GM12878 (cell line): ENCODE measurements at regions of chr18 and their contacts with region 1.

Region 1: GRCh38 chr18:6219116-6219717 is 195.5 kb downstream of the L3MBTL4 start:
- DNase-seq: no peak
- ATAC-seq: peak; percentile 78
- H3K4me3 ChIP-seq: no peak overlapping the region
- H3K27ac ChIP-seq: no peak overlapping the region
- H3K4me1 ChIP-seq: no peaks in the 10 kb centered on the region
- H3K27me3 ChIP-seq: no peaks in the 10 kb centered on the region
- CTCF ChIP-seq: peak; percentile 57 to 85 (median 72)
- EP300 ChIP-seq: no peak
- POLR2A ChIP-seq: no peak
- RAD21 ChIP-seq: peak; percentile 75

Region 2: GRCh38 chr18:5879479-5879882 is 339.7 kb before region 1 on chr18:
- CTCF ChIA-PET with region 1: interaction called, 6 read pairs
- POLR2A ChIA-PET with region 1: no interaction called
- RAD21 ChIA-PET with region 1: no interaction called
- SMC1A ChIA-PET with region 1: interaction called, 5 read pairs
- in situ Hi-C with region 1: loop called (anchors 10 kb)
- intact Hi-C with region 1: loop called (anchors 2 kb)
- DNase-seq: no peak
- ATAC-seq: no peak
- H3K4me3 ChIP-seq: no peak overlapping the region
- H3K27ac ChIP-seq: no peak overlapping the region
- H3K4me1 ChIP-seq: no peaks in the 10 kb centered on the region
- H3K27me3 ChIP-seq: no peaks in the 10 kb centered on the region; a peak in 2 of 4 replicates
- CTCF ChIP-seq: peak; percentile 66 to 72 (median 70); a peak in 5 of 6 replicates
- EP300 ChIP-seq: no peak
- POLR2A ChIP-seq: no peak
- RAD21 ChIP-seq: peak; percentile 92

Region 3: GRCh38 chr18:6004683-6005082 is 214.5 kb before region 1 on chr18:
- CTCF ChIA-PET with region 1: no interaction called
- POLR2A ChIA-PET with region 1: no interaction called
- RAD21 ChIA-PET with region 1: no interaction called
- SMC1A ChIA-PET with region 1: no interaction called
- in situ Hi-C with region 1: no loop called
- intact Hi-C with region 1: loop called (anchors 10 kb)
- DNase-seq: peak; percentile 83
- ATAC-seq: peak; percentile 99
- H3K4me3 ChIP-seq: peak overlapping the region; percentile 31; the same call in 1 of the 2 replicates
- H3K27ac ChIP-seq: peak overlapping the region; percentile 58
- H3K4me1 ChIP-seq: peaks cover 16% of the 10 kb centered on the region
- H3K27me3 ChIP-seq: no peaks in the 10 kb centered on the region
- CTCF ChIP-seq: no peak
- EP300 ChIP-seq: peak; percentile 67 to 93; a peak in 3 of 4 replicates
- POLR2A ChIP-seq: no peak
- RAD21 ChIP-seq: no peak; the same call in 1 of the 2 replicates

Region 4: DNA sequence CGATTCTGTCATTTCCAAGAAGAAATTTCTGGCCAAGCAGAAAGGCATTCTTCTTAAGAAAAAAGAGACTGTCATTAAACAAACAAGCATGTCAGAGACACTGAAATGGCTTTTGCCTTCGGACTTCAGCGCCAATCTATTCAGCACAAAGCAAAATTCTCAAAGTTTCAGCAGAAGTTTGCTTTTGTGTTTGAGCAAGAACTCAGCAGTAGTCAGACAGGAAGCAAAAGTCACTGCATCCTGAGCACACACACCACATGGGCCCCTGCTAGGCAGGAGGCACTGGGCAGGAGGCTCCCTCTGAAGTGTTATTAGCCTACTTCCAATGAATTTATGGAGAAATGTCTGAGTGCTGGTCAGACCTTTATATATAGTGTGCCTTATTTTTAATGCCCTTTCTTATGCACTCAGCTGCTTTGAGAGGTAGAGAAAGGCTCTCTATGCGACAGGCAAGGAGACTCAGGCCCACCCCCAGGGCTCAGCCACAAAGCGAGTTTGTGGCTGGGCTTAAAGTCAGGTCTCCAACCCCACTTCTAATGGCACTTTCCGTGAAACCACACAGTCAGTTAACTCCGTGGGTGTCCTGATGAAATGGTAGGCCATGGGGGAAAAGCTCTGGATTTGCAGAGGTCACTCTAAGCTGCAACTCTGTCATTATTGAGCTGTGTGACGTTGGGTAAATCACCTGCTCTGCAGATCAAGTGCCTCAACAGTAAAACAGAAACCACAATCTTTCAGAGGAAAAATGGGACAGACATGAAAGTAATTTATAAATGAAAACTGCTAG is 162.9 kb before region 1 on chr18:
- CTCF ChIA-PET with region 1: no interaction called
- POLR2A ChIA-PET with region 1: no interaction called
- RAD21 ChIA-PET with region 1: no interaction called
- SMC1A ChIA-PET with region 1: no interaction called
- in situ Hi-C with region 1: no loop called
- intact Hi-C with region 1: loop called (anchors 10 kb)
- DNase-seq: no peak
- ATAC-seq: peak; percentile 70
- H3K4me3 ChIP-seq: no peak overlapping the region
- H3K27ac ChIP-seq: no peak overlapping the region
- H3K4me1 ChIP-seq: peaks cover 6% of the 10 kb centered on the region
- H3K27me3 ChIP-seq: no peaks in the 10 kb centered on the region
- CTCF ChIP-seq: no peak
- EP300 ChIP-seq: no peak; a peak in 1 of 4 replicates
- POLR2A ChIP-seq: no peak
- RAD21 ChIP-seq: no peak

Region 5: DNA sequence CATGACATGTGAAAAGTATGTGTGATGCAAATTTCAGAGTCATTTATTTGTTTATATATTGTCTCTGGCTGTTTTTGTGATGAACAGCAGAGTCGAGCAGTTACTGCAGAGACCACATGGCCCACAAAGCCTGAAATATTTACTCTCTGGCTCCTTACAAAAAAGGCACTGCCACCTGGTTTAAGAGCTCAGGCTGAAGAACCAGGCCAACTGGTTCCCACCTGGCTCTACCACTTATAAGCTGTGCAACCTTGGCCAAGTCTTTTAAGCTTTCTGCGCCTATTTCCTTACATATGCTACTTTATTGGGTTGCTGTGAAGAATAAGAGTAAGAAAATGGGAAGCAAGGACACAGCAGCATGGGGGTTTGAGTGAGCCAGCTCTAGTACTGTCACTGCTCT is 12.1 kb before region 1 on chr18:
- CTCF ChIA-PET with region 1: interaction called, 11 read pairs
- POLR2A ChIA-PET with region 1: no interaction called
- RAD21 ChIA-PET with region 1: no interaction called
- SMC1A ChIA-PET with region 1: interaction called, 5 read pairs
- in situ Hi-C with region 1: no loop called
- intact Hi-C with region 1: no loop called
- DNase-seq: no peak
- ATAC-seq: no peak
- H3K4me3 ChIP-seq: no peak overlapping the region
- H3K27ac ChIP-seq: no peak overlapping the region
- H3K4me1 ChIP-seq: no peaks in the 10 kb centered on the region
- H3K27me3 ChIP-seq: no peaks in the 10 kb centered on the region
- CTCF ChIP-seq: no peak
- EP300 ChIP-seq: no peak
- POLR2A ChIP-seq: no peak
- RAD21 ChIP-seq: no peak

Region 6: DNA sequence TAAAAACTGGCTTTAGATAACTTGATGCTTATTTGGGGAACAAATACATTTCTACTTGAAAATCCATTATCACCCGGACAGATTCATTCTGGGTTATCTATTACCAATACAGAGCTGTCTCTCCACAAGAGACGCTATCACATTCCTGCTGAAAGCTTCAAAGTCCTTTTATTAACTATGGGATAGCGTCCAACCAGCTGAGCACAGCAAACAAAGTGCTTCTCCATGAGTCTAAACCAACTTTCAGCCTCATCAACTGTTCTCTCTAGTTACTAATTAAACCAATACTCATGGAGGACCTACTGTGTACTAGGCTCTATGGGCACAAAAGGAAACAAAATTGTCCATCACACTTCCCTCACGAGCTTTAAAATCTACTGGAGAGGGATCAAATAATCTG is 62.7 kb after region 1 on chr18:
- CTCF ChIA-PET with region 1: no interaction called
- POLR2A ChIA-PET with region 1: no interaction called
- RAD21 ChIA-PET with region 1: no interaction called
- SMC1A ChIA-PET with region 1: no interaction called
- in situ Hi-C with region 1: no loop called
- intact Hi-C with region 1: no loop called
- DNase-seq: no peak
- ATAC-seq: no peak
- H3K4me3 ChIP-seq: no peak overlapping the region
- H3K27ac ChIP-seq: no peak overlapping the region
- H3K4me1 ChIP-seq: no peaks in the 10 kb centered on the region
- H3K27me3 ChIP-seq: no peaks in the 10 kb centered on the region
- CTCF ChIP-seq: no peak
- EP300 ChIP-seq: no peak
- POLR2A ChIP-seq: no peak
- RAD21 ChIP-seq: no peak